ENCODE measurements at regions of chr11 and their contacts with region 1.

Region 1: DNA sequence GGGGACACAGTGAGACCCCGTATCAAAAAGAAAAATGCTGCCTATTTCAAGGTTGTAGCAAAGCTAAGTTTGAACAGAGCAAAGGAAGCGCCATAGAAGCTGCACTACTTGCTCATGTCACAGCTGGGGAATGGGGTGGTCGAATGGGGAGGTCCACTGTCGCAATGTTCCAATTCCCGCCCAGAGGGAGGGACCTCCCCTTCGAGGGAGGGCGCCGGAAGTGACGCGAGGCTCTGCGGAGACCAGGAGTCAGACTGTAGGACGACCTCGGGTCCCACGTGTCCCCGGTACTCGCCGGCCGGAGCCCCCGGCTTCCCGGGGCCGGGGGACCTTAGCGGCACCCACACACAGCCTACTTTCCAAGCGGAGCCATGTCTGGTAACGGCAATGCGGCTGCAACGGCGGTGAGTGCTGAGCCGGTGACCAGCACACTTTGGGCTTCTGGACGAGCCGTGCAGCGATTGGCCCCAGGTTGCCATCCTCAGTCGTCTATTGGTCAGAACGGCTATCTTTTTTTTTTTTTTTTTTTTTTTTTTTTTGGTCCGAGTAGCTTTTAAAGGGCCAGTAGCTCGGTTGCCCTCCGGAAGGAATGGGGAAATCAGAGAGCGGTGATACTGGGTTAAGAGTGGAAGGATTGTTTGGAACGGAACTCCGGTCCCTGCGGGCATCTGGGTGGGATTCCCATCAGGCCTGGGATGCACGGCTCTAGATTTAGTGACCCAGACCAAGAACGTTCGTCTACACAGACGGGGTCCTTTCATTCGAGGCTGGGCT is at the start of gene HMBS:
- DNase-seq: peak; percentile 95 to 98 (median 98)
- H3K4me3 ChIP-seq: peak within 1 kb of the TSS; percentile 69 to 94 (median 87)
- H3K27ac ChIP-seq: peak within 1 kb of the TSS; percentile 46 to 86
- H3K4me1 ChIP-seq: peaks cover 14 to 44% (median 34%) of the 10 kb centered on the region in 4 experiments
- H3K27me3 ChIP-seq: no peaks in the 10 kb centered on the region

Region 2: DNA sequence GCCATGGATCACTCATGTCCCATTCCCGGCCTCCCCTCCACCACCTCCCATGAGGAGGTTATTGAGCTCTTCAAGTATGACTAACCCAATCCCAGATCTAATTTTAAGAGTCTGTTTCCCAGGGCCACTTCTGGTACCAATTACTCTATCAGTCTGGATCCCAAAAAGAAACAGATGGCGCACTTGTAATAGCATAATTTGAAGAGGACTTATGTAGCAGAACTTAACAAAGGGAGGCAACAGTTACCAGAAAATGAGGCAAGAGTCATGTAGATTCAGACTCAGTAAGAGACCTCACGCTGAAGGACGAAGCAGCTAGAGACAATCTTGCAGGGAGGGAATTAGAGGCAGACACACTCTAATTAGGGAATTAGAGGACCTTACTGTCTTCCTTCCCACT is 340.8 kb before region 1 on chr11:
- CTCF ChIA-PET with region 1: no interaction called
- POLR2A ChIA-PET with region 1: no interaction called
- DNase-seq: no peak
- H3K4me3 ChIP-seq: no peak overlapping the region
- H3K27ac ChIP-seq: no peak overlapping the region
- H3K4me1 ChIP-seq: no peaks in the 10 kb centered on the region
- H3K27me3 ChIP-seq: no peaks in the 10 kb centered on the region

Region 3: DNA sequence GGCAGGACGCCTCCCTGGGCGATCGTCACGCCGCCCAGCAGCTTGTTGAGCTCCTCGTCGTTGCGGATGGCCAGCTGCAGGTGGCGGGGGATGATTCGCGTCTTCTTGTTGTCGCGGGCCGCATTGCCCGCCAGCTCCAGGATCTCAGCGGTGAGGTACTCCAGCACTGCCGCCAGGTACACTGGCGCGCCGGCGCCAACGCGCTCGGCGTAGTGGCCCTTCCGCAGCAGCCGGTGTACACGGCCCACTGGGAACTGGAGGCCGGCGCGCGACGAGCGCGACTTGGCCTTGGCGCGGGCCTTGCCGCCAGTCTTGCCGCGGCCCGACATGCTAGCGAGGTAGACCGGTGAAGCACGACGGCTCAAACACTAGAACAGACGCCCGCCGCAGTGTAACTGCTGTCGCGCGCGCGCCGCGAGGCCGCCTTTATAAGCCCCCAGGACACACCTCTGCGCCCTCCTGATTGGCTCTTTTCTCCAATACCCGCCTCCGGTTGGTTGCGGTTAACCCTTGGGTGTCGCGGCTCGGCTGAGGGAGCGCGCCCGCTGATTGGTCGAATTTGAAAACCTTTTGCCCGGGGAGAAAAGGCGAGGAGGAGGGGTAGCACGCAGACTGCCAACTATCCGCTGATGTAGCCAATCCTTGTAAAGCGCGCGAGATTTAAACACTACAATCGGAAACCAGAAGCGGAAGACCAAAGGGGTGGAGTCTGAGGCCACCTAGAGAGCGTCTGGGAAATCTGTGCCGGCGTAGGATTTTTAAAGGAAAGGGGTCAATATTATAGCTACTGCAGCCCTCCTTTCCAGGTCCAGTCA is 10.4 kb after region 1 on chr11:
- CTCF ChIA-PET with region 1: interaction called, 25 read pairs
- POLR2A ChIA-PET with region 1: interaction called, 19 read pairs
- DNase-seq: peak; percentile 100
- H3K4me3 ChIP-seq: peak overlapping the region; percentile 15 to 90 (median 79)
- H3K27ac ChIP-seq: peak overlapping the region; percentile 48 to 88
- H3K4me1 ChIP-seq: peaks cover 11 to 48% (median 38%) of the 10 kb centered on the region in 4 experiments
- H3K27me3 ChIP-seq: no peaks in the 10 kb centered on the region

Region 4: GRCh38 chr11:119263352-119263940 is 178.6 kb after region 1 on chr11:
- CTCF ChIA-PET with region 1: no interaction called
- POLR2A ChIA-PET with region 1: no interaction called
- DNase-seq: peak in 2 of 3 donors; percentile 37 to 52
- H3K4me3 ChIP-seq: peak overlapping the region in 3 of 7 experiments; percentile 4 to 35 (median 13)
- H3K27ac ChIP-seq: peak overlapping the region in 1 of 2 experiments; percentile 17
- H3K4me1 ChIP-seq: peaks cover 22 to 42% (median 27%) of the 10 kb centered on the region in 4 experiments
- H3K27me3 ChIP-seq: no peaks in the 10 kb centered on the region

Measured in common myeloid progenitor, CD34-positive (primary cell).